ENCODE measurements at regions of chr2 and their contacts with region 1.

Region 1: GRCh38 chr2:113273027-113273551 is 5.6 kb downstream of the PAX8 start:
- DNase-seq: peak; percentile 31

Region 2: GRCh38 chr2:113370478-113371091 is 97.5 kb after region 1 on chr2:
- in situ Hi-C with region 1: loop called (anchors 25 kb)
- DNase-seq: peak; percentile 78

Region 3: DNA sequence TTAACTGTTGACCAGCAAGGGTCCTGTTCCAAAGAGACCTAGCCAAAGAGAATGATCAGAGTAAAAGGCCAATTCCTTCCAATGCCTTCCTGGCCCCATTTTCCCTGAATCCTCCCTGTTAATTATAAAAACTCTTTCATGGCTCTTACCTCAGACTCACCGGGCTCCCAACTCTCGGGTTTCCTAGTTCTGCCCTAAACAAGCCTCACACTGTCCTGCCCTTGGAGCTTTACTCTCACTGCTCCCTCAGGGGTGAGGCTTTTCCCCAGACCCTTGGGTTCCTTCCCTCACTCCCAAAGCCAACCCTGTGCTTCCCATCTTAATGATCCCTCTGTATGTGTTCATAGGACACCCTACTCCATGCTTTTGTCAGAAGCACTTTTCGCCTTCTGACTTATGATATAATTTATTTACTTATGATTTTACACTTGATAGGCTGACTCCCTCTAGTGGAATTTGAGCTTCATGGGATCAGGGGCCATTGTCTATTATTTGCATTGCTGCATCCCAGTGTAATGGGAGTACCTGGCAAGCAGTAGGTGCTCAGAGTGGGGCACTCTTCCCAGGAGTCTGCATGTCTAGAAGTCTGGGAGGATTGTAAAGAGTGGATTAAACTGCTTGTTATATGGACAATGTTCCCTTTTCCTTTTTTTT is 134.5 kb after region 1 on chr2:
- in situ Hi-C with region 1: no loop called
- DNase-seq: peak; percentile 26